HEK293 (cell line): ENCODE measurements at regions of chr9 and their contacts with region 1.

Region 1: GRCh38 chr9:133347985-133348717 is at the starts of genes MED22 and RPL7A:
- H3K4me3 ChIP-seq: peak within 1 kb of the TSS; percentile 91
- H3K27ac ChIP-seq: peak within 1 kb of the TSS; percentile 100
- H3K4me1 ChIP-seq: no peaks in the 10 kb centered on the region
- CTCF ChIP-seq: peak; percentile 58; the same call in 1 of the 2 replicates

Region 2: GRCh38 chr9:133327834-133328484 is 20.2 kb before region 1 on chr9:
- CTCF ChIA-PET with region 1: interaction called, 17 read pairs
- POLR2A ChIA-PET with region 1: interaction called, 20 read pairs
- H3K4me3 ChIP-seq: no peak overlapping the region
- H3K27ac ChIP-seq: no peak overlapping the region
- H3K4me1 ChIP-seq: no peaks in the 10 kb centered on the region
- CTCF ChIP-seq: no peak

Region 3: GRCh38 chr9:133362359-133363044 is 14.4 kb after region 1 on chr9:
- CTCF ChIA-PET with region 1: interaction called, 3 read pairs
- POLR2A ChIA-PET with region 1: interaction called, 89 read pairs
- H3K4me3 ChIP-seq: no peak overlapping the region
- H3K27ac ChIP-seq: peak overlapping the region; percentile 37; the same call in 1 of the 2 replicates
- H3K4me1 ChIP-seq: no peaks in the 10 kb centered on the region
- CTCF ChIP-seq: no peak

Region 4: GRCh38 chr9:133375724-133376654 is 27.8 kb after region 1 on chr9 and contains the starts of genes STKLD1 and SURF4:
- CTCF ChIA-PET with region 1: interaction called, 7 read pairs
- POLR2A ChIA-PET with region 1: interaction called, 24 read pairs
- H3K4me3 ChIP-seq: peak within 1 kb of the TSS; percentile 57
- H3K27ac ChIP-seq: peak within 1 kb of the TSS; percentile 93
- H3K4me1 ChIP-seq: peaks cover 5% of the 10 kb centered on the region
- CTCF ChIP-seq: no peak

Region 5: DNA sequence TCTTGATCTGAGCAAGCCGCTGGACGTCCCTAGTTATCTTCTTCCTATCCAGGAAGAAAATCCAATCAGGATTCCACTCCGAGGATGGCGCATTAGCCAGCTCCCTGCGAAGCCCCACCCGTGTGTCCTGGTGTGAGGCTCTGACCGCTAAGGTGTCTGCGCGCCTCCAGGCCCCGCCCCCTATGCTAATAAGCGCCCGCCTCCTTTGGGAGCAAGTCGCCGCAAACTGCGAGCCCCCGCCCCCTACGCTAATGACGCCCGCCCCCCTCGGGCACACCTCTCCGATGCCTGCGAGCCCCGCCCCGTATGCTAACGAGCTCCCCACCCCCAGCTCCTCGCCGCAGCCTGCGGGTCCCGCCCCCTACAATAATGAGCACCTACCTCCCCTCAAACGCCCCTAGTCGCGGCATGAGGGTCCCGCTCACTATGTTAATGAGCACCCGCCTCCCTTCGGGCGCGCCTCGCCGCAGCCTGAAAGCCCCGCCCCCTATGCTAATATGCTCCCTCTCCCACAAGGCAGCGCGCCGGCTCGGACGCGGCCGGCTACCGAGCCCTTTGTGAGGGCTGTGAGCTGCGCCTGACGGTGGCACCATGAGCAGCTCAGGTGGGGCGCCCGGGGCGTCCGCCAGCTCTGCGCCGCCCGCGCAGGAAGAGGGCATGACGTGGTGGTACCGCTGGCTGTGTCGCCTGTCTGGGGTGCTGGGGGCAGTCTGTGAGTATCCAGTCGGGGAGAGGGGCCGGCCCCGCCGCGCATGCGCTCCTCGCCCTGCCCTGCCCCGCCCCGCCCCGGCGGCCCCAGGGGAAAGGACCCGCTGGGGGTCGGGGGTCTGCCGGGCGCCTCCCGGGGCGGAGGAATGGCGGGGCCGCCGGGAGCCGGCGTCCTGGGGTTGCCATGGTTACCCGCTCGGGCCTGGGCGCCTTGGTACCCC is 111.6 kb after region 1 on chr9 and contains the start of gene CACFD1:
- CTCF ChIA-PET with region 1: no interaction called
- POLR2A ChIA-PET with region 1: interaction called, 19 read pairs
- H3K4me3 ChIP-seq: peak within 1 kb of the TSS; percentile 86
- H3K27ac ChIP-seq: peak within 1 kb of the TSS; percentile 92
- H3K4me1 ChIP-seq: no peaks in the 10 kb centered on the region
- CTCF ChIP-seq: no peak; the same call in 1 of the 2 replicates